ENCODE measurements at regions of chr2 and their contacts with region 1.

Region 1: GRCh38 chr2:98026927-98027522 is 31.3 kb upstream of the TMEM131 start:
- DNase-seq: peak; percentile 98
- ATAC-seq: peak; percentile 93
- H3K4me3 ChIP-seq: peak overlapping the region; percentile 53
- H3K27ac ChIP-seq: peak overlapping the region; percentile 80
- H3K4me1 ChIP-seq: peaks cover 35% of the 10 kb centered on the region
- H3K27me3 ChIP-seq: no peaks in the 10 kb centered on the region
- CTCF ChIP-seq: no peak
- EP300 ChIP-seq: peak; percentile 87 to 93
- POLR2A ChIP-seq: no peak
- RAD21 ChIP-seq: no peak

Region 2: GRCh38 chr2:97957432-97958186 is 69.4 kb before region 1 on chr2:
- CTCF ChIA-PET with region 1: interaction called, 6 read pairs
- POLR2A ChIA-PET with region 1: interaction called, 3 read pairs
- RAD21 ChIA-PET with region 1: interaction called, 6 read pairs
- SMC1A ChIA-PET with region 1: interaction called, 14 read pairs
- in situ Hi-C with region 1: no loop called
- intact Hi-C with region 1: loop called (anchors 2 kb)
- DNase-seq: no peak
- ATAC-seq: peak; percentile 58
- H3K4me3 ChIP-seq: peak overlapping the region; percentile 39; the same call in 1 of the 2 replicates
- H3K27ac ChIP-seq: 0 out of 2 replicates have a peak overlapping the region, but pooled peaks have one; percentile 10
- H3K4me1 ChIP-seq: peaks cover 34% of the 10 kb centered on the region
- H3K27me3 ChIP-seq: no peaks in the 10 kb centered on the region
- CTCF ChIP-seq: no peak
- EP300 ChIP-seq: no peak
- POLR2A ChIP-seq: no peak
- RAD21 ChIP-seq: no peak

Region 3: DNA sequence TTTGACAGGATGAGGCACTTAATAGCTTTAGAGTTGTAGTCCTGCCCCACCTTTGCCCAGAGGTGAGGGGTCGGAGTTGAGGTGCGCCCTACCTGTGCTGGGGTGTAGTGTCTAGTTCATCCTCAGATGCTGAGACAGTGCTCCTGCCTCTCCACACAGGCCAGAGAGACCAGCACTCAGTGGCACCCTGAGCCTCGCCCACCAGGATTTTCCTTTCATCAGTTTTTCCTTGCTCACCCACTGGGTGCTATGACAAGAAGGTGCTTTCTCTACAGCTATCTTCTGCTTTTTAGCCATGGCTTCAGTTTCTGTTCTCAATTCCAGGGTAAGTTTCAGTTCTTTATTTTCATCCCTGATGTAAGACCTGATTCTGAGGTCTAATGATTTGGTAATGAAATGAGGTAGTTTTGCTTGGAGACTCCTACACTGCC is 14.4 kb before region 1 on chr2:
- CTCF ChIA-PET with region 1: interaction called, 9 read pairs
- POLR2A ChIA-PET with region 1: interaction called, 7 read pairs
- RAD21 ChIA-PET with region 1: interaction called, 26 read pairs
- SMC1A ChIA-PET with region 1: interaction called, 28 read pairs
- in situ Hi-C with region 1: no loop called
- intact Hi-C with region 1: loop called (anchors 1 kb)
- DNase-seq: peak; percentile 88
- ATAC-seq: peak; percentile 83
- H3K4me3 ChIP-seq: peak overlapping the region; percentile 46
- H3K27ac ChIP-seq: peak overlapping the region; percentile 97
- H3K4me1 ChIP-seq: peaks cover 55% of the 10 kb centered on the region
- H3K27me3 ChIP-seq: no peaks in the 10 kb centered on the region
- CTCF ChIP-seq: no peak
- EP300 ChIP-seq: peak; percentile 85 to 99; a peak in 3 of 4 replicates
- POLR2A ChIP-seq: peak; percentile 59; the same call in 1 of the 2 replicates
- RAD21 ChIP-seq: 0 out of 2 replicates have a peak, but pooled peaks have one; percentile 24

Region 4: DNA sequence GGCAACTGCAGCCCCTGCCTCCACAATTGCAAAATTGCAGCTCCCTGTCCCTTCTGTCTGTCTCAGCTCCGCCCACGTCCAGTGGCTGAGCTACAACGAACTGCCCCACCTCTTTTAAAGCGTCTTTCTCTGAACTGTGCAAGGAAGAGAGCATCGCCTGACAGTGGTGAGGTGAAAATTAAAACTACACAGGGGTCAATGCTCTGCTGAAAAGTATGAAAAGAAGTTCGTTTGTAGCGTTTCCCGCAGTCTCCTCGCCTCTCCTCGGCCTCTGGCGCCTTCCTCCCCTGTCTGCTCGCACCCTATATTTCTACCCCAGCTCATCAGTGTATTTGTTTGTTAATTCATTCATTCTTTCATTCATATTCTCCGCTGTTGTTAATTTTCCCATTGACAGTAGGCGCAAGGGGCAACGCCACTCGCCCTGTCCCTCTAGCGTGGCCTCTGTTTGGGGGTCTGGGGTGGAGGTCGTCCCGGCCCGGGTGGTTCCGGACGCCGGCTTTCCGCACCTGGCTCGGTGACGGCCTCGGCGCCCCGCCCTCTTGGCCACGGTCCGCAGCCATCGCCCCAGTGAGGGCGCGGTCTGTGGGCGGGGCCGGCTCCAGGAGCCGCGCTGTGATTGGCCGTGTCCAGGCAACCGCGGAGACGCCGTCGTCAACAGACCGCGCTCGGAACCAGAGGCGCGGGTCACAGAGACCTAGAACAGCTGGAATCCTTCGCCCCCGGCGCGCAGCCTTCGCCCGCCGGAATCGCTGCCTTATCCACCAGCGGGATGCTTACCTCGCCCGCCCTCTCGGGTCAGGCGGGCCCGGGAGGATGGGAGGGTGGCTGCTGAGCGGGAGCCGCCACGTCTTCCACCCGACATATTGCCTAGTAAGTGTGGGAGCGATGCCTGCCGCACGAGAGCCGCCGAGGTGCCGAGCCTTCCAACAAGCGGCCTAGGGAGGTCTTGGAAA is 59.7 kb after region 1 on chr2 and contains the start of gene VWA3B:
- CTCF ChIA-PET with region 1: interaction called, 5 read pairs
- POLR2A ChIA-PET with region 1: no interaction called
- RAD21 ChIA-PET with region 1: interaction called, 3 read pairs
- SMC1A ChIA-PET with region 1: interaction called, 14 read pairs
- in situ Hi-C with region 1: no loop called
- intact Hi-C with region 1: loop called (anchors 5 kb)
- DNase-seq: no peak
- ATAC-seq: peak; percentile 96
- H3K4me3 ChIP-seq: peak within 1 kb of the TSS; percentile 82
- H3K27ac ChIP-seq: no peak within 1 kb of the TSS
- H3K4me1 ChIP-seq: peaks cover 13% of the 10 kb centered on the region
- H3K27me3 ChIP-seq: no peaks in the 10 kb centered on the region
- CTCF ChIP-seq: no peak
- EP300 ChIP-seq: no peak
- POLR2A ChIP-seq: no peak
- RAD21 ChIP-seq: no peak
- polyA plus RNA-seq, gene VWA3B: not detected

Region 5: DNA sequence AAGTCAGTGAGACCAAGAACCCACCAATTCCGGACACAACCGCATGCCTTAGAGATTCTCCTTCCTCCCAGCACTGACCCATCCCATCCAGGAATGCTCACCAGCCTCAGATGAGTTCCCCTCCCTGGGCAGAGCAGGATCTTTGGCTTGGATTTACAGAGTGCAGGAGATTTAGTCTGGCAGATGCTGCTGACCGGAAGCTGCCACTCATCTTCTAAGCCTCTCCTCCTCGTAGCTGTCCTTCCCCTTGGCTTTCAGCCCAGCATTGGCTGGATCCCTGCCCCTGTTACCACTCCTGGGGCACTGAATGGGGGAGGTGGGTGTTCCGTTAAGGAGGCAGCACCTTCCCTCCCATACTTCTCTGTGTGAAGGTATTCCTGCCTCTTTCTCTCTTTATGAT is 113.2 kb after region 1 on chr2:
- CTCF ChIA-PET with region 1: no interaction called
- POLR2A ChIA-PET with region 1: no interaction called
- RAD21 ChIA-PET with region 1: no interaction called
- SMC1A ChIA-PET with region 1: no interaction called
- in situ Hi-C with region 1: no loop called
- intact Hi-C with region 1: no loop called
- DNase-seq: no peak
- ATAC-seq: no peak
- H3K4me3 ChIP-seq: no peak overlapping the region
- H3K27ac ChIP-seq: no peak overlapping the region
- H3K4me1 ChIP-seq: no peaks in the 10 kb centered on the region
- H3K27me3 ChIP-seq: no peaks in the 10 kb centered on the region
- CTCF ChIP-seq: no peak
- EP300 ChIP-seq: no peak
- POLR2A ChIP-seq: no peak
- RAD21 ChIP-seq: no peak

Region 6: GRCh38 chr2:98394595-98395153 is 367.6 kb after region 1 on chr2:
- CTCF ChIA-PET with region 1: no interaction called
- POLR2A ChIA-PET with region 1: no interaction called
- RAD21 ChIA-PET with region 1: no interaction called
- SMC1A ChIA-PET with region 1: no interaction called
- in situ Hi-C with region 1: no loop called
- intact Hi-C with region 1: no loop called
- DNase-seq: no peak
- ATAC-seq: no peak
- H3K4me3 ChIP-seq: no peak overlapping the region
- H3K27ac ChIP-seq: no peak overlapping the region
- H3K4me1 ChIP-seq: no peaks in the 10 kb centered on the region
- H3K27me3 ChIP-seq: peaks cover 0 to 2% of the 10 kb centered on the region in 2 experiments; a peak in 2 of 4 replicates
- CTCF ChIP-seq: no peak
- EP300 ChIP-seq: no peak
- POLR2A ChIP-seq: no peak
- RAD21 ChIP-seq: no peak

Measured in GM12878 (cell line).